Activated T-helper 1 cell treated with anti-CD3 and anti-CD28 coated beads, Interleukin-12 subunit alpha, Interleukin-12 subunit beta, Interleukin-2, Interleukin-4 antibody, amounts not matched to agents 30 ng/mL and 10 ng/mL and 1 ng/mL, durations not matched to agents 14 hours and 24 hours and 36 hours (primary cell): ENCODE measurements at regions of chr13 and their contacts with region 1.

Region 1: DNA sequence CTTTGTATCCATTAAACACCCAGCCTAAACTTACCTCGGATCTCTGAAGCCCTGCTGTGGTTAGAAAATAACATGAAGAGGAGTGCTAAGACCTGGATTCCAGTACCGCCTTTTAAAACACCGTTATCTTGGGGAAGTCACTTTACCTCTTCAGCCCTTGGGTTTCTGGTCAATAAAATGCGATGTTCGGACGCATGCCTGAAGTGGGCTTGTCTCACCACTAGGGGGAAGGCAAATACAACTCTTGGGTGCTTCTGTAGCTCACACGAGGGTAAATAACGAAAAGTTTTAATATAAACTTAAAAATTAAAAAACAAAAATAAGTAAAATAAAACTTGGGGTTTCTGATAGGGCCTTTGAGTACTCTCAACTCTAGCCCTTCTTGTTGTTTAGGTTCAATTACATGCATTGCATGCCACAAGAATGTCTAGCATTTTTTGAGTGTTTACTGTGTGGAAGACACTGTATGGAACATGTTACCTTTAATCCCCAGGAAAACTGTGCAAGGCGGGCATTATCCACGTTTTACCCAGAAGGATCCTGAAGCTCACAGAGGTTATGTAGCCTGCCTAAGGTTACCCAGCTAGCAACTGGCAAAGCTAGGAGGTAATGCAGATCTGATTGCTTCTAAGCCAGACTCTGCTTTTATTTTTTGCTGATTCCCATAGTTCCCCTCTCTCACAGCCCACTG is 240.4 kb downstream of the LMO7 start:
- DNase-seq: peak; percentile 27
- H3K4me3 Mint-ChIP-seq: no peak overlapping the region
- H3K27ac Mint-ChIP-seq: no peak overlapping the region
- H3K4me1 Mint-ChIP-seq: peaks cover 17% of the 10 kb centered on the region
- H3K27me3 Mint-ChIP-seq: peaks cover 8% of the 10 kb centered on the region

Region 2: GRCh38 chr13:75416327-75417005 is 460.0 kb before region 1 on chr13:
- intact Hi-C with region 1: no loop called
- DNase-seq: no peak
- H3K4me3 Mint-ChIP-seq: no peak overlapping the region
- H3K27ac Mint-ChIP-seq: no peak overlapping the region
- H3K4me1 Mint-ChIP-seq: peaks cover 7% of the 10 kb centered on the region
- H3K27me3 Mint-ChIP-seq: peaks cover 2% of the 10 kb centered on the region

Region 3: GRCh38 chr13:75825594-75825993 is 50.9 kb before region 1 on chr13:
- intact Hi-C with region 1: no loop called
- DNase-seq: no peak
- H3K4me3 Mint-ChIP-seq: no peak overlapping the region
- H3K27ac Mint-ChIP-seq: no peak overlapping the region
- H3K4me1 Mint-ChIP-seq: no peaks in the 10 kb centered on the region
- H3K27me3 Mint-ChIP-seq: no peaks in the 10 kb centered on the region

Region 4: GRCh38 chr13:75836441-75836840 is 40.1 kb before region 1 on chr13:
- intact Hi-C with region 1: no loop called
- DNase-seq: no peak
- H3K4me3 Mint-ChIP-seq: no peak overlapping the region
- H3K27ac Mint-ChIP-seq: no peak overlapping the region
- H3K4me1 Mint-ChIP-seq: no peaks in the 10 kb centered on the region
- H3K27me3 Mint-ChIP-seq: no peaks in the 10 kb centered on the region

Region 5: GRCh38 chr13:76016799-76017400 is 140.4 kb after region 1 on chr13:
- intact Hi-C with region 1: loop called (anchors 1 kb)
- DNase-seq: no peak
- H3K4me3 Mint-ChIP-seq: no peak overlapping the region
- H3K27ac Mint-ChIP-seq: no peak overlapping the region
- H3K4me1 Mint-ChIP-seq: no peaks in the 10 kb centered on the region
- H3K27me3 Mint-ChIP-seq: no peaks in the 10 kb centered on the region